WTC11 (cell line): ENCODE measurements at regions of chr6 and their contacts with region 1.

Region 1: DNA sequence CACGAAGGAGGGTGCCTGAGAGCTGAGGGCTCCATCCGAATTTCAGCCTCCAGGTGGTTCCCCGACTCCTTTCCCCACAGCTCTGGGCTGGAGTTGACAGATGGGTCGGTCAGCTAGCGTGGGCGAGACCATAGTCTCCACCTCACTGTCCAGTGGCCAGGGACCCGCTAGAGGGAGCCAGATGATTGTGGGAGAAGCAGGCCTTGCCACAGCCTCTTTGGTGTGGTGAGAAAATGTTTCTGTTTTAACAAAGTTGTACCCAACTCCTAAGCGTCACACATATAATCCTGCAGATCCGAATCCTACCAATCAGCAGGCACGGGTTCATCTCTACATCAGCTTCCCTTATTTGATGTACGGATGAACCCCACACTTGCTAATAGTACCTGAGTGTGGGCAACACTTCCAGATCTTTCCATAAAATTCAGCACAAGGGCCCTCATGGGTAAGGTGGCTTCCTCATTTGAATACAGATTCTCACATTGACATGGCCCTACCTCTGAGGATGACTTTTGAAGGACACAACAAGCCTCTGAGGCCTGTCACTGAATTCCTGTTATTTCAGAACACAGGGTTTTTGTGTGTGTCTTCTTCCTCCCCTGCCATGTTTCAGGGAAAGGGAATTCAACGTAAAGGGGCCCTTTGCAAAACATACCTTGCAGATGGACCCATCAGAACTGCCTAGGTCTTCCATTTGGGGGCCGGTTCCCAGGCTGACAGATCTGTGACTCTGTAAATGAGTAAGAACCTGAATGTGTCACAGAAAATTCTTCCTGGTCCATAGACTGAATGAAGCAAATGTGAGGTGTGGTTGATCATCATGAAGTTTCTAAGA is 103.2 kb upstream of the DUSP22 start:
- DNase-seq: peak; percentile 91
- ATAC-seq: peak; percentile 99
- H3K4me3 Mint-ChIP-seq: no peak overlapping the region
- H3K27ac Mint-ChIP-seq: no peak overlapping the region
- H3K4me1 Mint-ChIP-seq: no peaks in the 10 kb centered on the region
- H3K27me3 Mint-ChIP-seq: no peaks in the 10 kb centered on the region
- CTCF ChIP-seq: peak; percentile 56

Region 2: DNA sequence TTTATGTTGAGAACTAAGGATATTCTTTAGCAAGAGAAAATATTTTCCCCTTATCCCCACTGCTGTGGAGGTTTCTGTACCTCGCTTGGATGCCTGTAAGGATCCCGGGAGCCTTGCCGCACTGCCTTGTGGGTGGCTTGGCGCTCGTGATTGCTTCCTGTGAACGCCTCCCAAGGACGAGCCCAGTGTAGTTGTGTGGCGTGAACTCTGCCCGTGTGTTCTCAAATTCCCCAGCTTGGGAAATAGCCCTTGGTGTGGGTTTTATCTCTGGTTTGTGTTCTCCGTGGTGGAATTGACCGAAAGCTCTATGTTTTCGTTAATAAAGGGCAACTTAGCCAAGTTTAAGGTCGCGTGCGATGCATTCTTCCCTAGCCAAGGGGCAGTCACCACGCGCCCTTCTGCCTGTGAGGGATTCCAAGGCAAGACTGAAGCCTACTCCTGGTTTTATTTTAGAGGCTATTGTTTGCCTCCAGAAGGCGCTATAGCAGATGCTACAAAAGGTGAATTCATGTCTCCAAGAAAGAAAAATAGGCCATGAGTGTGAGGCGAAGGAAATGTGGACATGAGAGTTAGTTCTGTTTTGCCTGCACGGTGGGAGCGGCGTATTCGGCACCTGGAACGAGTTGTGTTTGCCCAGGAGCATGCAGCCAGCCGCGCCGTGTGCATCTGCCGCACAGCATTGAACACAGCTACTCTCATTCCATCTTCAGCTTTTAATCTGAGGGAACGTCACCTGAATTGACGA is 162.1 kb after region 1 on chr6:
- CTCF ChIA-PET with region 1: interaction called, 15 read pairs
- POLR2A ChIA-PET with region 1: no interaction called
- DNase-seq: no peak
- ATAC-seq: peak; percentile 40; the same call in 1 of the 2 replicates
- H3K4me3 Mint-ChIP-seq: no peak overlapping the region
- H3K27ac Mint-ChIP-seq: peak overlapping the region; percentile 34; the same call in 1 of the 2 replicates
- H3K4me1 Mint-ChIP-seq: peaks cover 8% of the 10 kb centered on the region
- H3K27me3 Mint-ChIP-seq: peaks cover 2% of the 10 kb centered on the region
- CTCF ChIP-seq: no peak

Region 3: GRCh38 chr6:391559-392440 is 202.8 kb after region 1 on chr6 and contains the start of gene IRF4:
- CTCF ChIA-PET with region 1: interaction called, 18 read pairs
- POLR2A ChIA-PET with region 1: no interaction called
- DNase-seq: peak; percentile 55
- ATAC-seq: peak; percentile 60
- H3K4me3 Mint-ChIP-seq: peak within 1 kb of the TSS; percentile 77
- H3K27ac Mint-ChIP-seq: no peak within 1 kb of the TSS
- H3K4me1 Mint-ChIP-seq: peaks cover 9% of the 10 kb centered on the region
- H3K27me3 Mint-ChIP-seq: peaks cover 90% of the 10 kb centered on the region
- CTCF ChIP-seq: no peak
- total RNA-seq, gene IRF4: 1.6 to 2.2 TPM (median 2.2 TPM) in 3 replicates

Region 4: GRCh38 chr6:579339-579738 is 390.3 kb after region 1 on chr6:
- CTCF ChIA-PET with region 1: no interaction called
- POLR2A ChIA-PET with region 1: no interaction called
- DNase-seq: no peak
- ATAC-seq: no peak
- H3K4me3 Mint-ChIP-seq: no peak overlapping the region
- H3K27ac Mint-ChIP-seq: no peak overlapping the region
- H3K4me1 Mint-ChIP-seq: peaks cover 20% of the 10 kb centered on the region
- H3K27me3 Mint-ChIP-seq: no peaks in the 10 kb centered on the region
- CTCF ChIP-seq: no peak